Breast epithelium (tissue), 4 donors: ENCODE measurements at regions of chr5 and their contacts with region 1.

Region 1: DNA sequence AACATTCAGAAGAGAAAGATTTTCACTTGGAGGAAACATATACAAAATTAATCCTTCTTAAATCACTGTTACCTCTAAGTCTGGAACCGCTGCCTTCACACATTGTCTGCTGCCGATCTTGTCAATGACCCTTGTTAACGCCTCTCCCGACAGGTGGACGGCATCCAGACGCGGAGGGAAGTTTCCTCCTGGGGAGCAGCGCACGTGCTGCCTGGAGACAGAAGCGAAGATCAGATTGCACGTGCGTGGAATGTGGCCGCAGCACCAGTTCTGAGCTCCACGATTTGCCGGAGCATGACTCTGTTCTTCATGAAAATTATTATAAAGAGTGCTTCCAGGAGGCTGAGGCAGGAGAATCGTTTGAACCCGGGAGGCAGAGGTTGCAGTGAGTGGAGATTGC is 183.6 kb upstream of the IRX4 start:
- DNase-seq: no peak
- H3K4me3 ChIP-seq: no peak overlapping the region
- H3K27ac ChIP-seq: no peak overlapping the region
- H3K4me1 ChIP-seq: no peaks in the 10 kb centered on the region
- H3K27me3 ChIP-seq: no peaks in the 10 kb centered on the region
- CTCF ChIP-seq: no peak
- POLR2A ChIP-seq: no peak

Region 2: DNA sequence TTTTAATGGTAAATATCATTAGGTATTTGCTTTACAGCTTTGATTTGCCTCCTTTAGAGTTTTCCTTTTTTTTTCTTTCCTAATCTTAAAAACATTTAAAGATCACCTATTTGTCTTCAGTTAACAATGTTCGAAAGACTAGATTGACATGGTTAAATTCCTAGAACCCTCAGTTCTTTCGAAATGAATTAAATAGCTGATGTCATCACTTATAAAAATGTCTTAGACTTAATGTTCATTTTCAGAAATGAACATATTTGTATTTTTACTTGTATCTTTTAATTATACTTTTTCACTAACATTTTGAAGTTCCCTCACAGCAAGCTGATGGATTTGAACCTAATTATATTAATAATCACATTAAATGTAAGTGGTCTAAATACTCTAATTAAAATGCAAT is 21.6 kb after region 1 on chr5:
- intact Hi-C with region 1: no loop called
- DNase-seq: no peak
- H3K4me3 ChIP-seq: no peak overlapping the region
- H3K27ac ChIP-seq: no peak overlapping the region
- H3K4me1 ChIP-seq: no peaks in the 10 kb centered on the region
- H3K27me3 ChIP-seq: no peaks in the 10 kb centered on the region
- CTCF ChIP-seq: no peak
- POLR2A ChIP-seq: no peak

Region 3: GRCh38 chr5:2143646-2144386 is 77.4 kb after region 1 on chr5:
- intact Hi-C with region 1: loop called (anchors 2 kb)
- DNase-seq: no peak
- H3K4me3 ChIP-seq: no peak overlapping the region
- H3K27ac ChIP-seq: no peak overlapping the region
- H3K4me1 ChIP-seq: no peaks in the 10 kb centered on the region
- H3K27me3 ChIP-seq: peaks cover 0 to 17% of the 10 kb centered on the region in 2 donors
- CTCF ChIP-seq: no peak
- POLR2A ChIP-seq: no peak